Calu3 (cell line): ENCODE measurements at regions of chr18 and their contacts with region 1.

Region 1: DNA sequence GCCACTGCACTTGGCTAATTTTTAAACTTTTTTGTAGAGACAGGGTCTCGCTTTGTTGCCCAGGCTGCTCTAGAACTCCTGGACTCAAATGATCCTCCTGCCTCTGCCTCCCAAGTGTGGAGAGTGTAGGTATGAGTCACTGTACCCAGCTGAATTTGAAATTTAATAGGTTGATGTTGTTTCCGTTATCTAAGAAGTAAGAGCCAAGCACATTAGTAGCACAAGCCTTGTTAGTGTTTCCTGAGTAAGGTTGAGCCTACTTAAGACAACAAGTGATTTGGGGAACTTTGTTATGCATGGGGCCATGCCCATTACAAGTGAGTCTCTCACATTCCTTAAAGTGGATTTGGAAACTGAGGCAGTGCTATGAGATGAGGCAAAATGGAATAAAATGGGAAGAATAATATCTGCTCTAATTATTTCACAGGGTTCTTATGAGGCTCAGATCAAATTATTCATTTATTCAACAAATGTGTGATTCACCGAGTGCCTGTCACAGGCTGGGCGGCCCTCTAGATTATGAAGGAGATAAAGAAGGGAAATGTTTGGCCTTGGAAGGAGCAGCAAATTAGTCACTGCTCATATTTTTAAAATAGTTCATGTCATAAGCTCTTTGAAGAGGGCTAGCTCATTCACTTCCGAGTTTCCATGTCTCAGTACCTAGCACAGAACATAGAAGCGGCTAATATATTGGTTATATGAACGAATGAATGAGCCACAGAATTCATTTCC is 217.2 kb downstream of the LDLRAD4 start:
- DNase-seq: no peak
- H3K4me3 Mint-ChIP-seq: no peak overlapping the region
- H3K27ac Mint-ChIP-seq: no peak overlapping the region
- H3K4me1 Mint-ChIP-seq: no peaks in the 10 kb centered on the region
- H3K27me3 Mint-ChIP-seq: peaks cover 64% of the 10 kb centered on the region
- CTCF ChIP-seq: no peak

Region 2: DNA sequence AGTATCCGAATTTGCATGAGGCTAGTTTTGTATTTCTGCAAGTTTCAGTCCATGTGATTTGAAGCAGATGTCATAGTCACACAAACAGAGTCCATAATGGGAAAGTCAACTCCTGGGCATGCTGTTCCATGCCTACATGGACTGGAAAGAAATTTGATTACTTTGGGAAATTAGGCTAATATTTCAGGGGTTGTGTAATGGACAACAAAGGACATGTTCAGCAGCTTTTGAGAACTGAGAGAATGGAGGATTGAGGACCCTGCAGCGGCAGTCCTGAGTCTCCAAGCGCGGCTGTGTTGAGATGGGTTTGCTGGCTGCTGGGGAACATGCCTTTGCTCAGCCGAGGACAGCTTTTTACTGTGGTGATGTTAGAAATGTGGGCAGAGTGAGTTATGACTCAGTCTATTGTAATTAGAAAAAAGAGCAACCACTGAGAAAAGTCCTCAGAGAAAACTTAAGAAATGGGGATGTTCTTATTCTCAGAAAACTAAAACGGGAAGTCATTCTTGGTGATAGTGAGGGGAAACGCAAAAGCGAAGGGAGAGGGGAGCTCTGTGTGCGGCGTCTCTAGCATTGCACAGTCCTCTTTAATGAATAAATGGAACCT is 141.4 kb after region 1 on chr18:
- CTCF ChIA-PET with region 1: no interaction called
- intact Hi-C with region 1: loop called (anchors 10 kb)
- DNase-seq: no peak
- H3K4me3 Mint-ChIP-seq: no peak overlapping the region
- H3K27ac Mint-ChIP-seq: no peak overlapping the region
- H3K4me1 Mint-ChIP-seq: no peaks in the 10 kb centered on the region
- H3K27me3 Mint-ChIP-seq: peaks cover 40% of the 10 kb centered on the region
- CTCF ChIP-seq: no peak